IMR-90 (cell line): ENCODE measurements at regions of chr2 and their contacts with region 1.

Region 1: GRCh38 chr2:119468154-119468955 is 36.7 kb downstream of the TMEM37 start:
- DNase-seq: peak; percentile 25
- ATAC-seq: peak; percentile 46
- H3K4me3 ChIP-seq: no peak overlapping the region
- H3K27ac ChIP-seq: no peak overlapping the region
- H3K4me1 ChIP-seq: no peaks in the 10 kb centered on the region
- H3K27me3 ChIP-seq: no peaks in the 10 kb centered on the region; the same call in none of the 2 replicates
- CTCF ChIP-seq: no peak
- POLR2A ChIP-seq: no peak
- RAD21 ChIP-seq: no peak

Region 2: DNA sequence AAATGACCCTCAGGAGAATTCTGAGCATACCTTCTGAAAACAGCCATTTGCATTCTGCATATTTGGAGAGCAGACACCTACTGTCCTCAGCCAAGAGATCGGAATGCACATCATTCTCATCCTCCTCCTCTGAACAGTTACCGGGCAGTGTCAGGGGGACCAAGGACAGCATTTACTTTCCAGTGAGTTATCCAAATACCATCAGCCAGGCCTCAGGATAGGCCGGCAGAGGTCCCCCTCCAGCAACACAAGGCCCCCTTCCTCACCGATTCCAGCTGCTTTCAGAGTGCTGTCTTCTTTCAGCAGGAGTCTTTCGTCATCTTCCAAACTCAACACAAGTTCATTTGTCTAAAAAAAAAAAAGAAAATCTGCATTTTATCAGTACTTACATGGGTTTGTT is 157.0 kb before region 1 on chr2:
- CTCF ChIA-PET with region 1: no interaction called
- POLR2A ChIA-PET with region 1: no interaction called
- dilution Hi-C with region 1: no loop called
- in situ Hi-C with region 1: no loop called
- intact Hi-C with region 1: no loop called
- DNase-seq: no peak
- ATAC-seq: no peak
- H3K4me3 ChIP-seq: no peak overlapping the region
- H3K27ac ChIP-seq: no peak overlapping the region
- H3K4me1 ChIP-seq: no peaks in the 10 kb centered on the region
- H3K27me3 ChIP-seq: no peaks in the 10 kb centered on the region
- CTCF ChIP-seq: no peak
- POLR2A ChIP-seq: no peak
- RAD21 ChIP-seq: no peak

Region 3: DNA sequence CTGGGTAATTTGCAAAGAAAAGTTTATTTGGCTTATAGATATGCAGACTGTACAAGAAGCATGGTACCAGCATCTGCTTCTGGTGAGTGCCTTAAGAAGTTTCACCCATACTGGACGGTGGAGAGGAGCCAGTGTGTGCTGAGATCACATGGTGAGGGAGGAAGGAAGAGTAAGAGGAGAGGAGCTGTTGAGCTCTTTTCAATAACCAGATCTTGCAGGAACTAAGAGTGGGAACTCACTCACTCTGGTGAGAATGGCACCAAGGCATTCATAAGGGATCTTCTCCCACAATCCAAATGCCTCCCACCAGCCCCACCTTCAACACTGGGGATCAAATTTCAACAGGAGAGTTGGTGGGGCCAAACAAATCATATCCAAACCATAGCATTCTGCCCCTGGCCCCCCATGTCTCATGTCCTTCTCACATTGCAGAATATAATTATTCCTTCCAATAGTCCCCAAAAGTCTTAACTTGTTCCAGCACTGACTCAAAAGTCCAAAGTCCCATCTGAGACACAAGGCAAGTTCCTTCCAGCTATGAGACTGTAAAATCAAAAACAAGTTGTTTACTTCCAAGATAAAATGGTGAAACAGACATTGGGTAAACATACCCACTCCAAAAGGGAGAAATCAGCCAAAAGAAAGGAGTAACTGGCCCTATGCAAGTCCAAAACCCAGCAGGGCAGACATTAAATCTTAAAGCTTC is 48.4 kb before region 1 on chr2:
- CTCF ChIA-PET with region 1: no interaction called
- POLR2A ChIA-PET with region 1: no interaction called
- dilution Hi-C with region 1: no loop called
- in situ Hi-C with region 1: loop called (anchors 5 kb)
- intact Hi-C with region 1: no loop called
- DNase-seq: no peak
- ATAC-seq: no peak
- H3K4me3 ChIP-seq: no peak overlapping the region
- H3K27ac ChIP-seq: no peak overlapping the region
- H3K4me1 ChIP-seq: no peaks in the 10 kb centered on the region
- H3K27me3 ChIP-seq: peaks cover 9% of the 10 kb centered on the region
- CTCF ChIP-seq: no peak
- POLR2A ChIP-seq: no peak
- RAD21 ChIP-seq: no peak